ENCODE measurements at regions of chr10 and their contacts with region 1.

Region 1: DNA sequence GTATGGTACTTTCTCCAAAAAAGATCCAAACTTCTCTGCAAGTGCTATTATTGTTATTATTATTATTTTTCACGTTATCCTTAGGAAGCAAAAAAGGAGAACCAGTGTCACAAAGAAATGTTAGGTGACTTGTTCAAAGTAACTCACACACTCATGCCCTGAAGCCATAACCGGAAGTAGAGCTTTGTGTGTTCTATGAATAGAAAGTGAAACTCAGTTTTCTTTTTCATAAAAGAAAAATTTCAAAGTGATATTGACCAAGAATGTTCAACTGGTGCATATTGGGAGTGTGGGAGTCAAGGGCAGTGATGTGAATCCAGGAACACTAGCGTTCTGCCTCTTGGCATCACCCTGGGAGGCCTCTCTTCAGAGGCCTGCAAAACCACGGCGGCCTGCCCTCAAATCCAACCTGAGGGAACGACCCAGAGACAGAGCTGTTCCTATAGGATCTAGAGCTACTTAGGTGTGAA is 106.1 kb downstream of the PRKCQ start:
- DNase-seq: peak; percentile 82
- H3K4me3 Mint-ChIP-seq: peak overlapping the region; percentile 85
- H3K27ac Mint-ChIP-seq: peak overlapping the region; percentile 96
- H3K4me1 Mint-ChIP-seq: peaks cover 54% of the 10 kb centered on the region
- H3K27me3 Mint-ChIP-seq: no peaks in the 10 kb centered on the region

Region 2: DNA sequence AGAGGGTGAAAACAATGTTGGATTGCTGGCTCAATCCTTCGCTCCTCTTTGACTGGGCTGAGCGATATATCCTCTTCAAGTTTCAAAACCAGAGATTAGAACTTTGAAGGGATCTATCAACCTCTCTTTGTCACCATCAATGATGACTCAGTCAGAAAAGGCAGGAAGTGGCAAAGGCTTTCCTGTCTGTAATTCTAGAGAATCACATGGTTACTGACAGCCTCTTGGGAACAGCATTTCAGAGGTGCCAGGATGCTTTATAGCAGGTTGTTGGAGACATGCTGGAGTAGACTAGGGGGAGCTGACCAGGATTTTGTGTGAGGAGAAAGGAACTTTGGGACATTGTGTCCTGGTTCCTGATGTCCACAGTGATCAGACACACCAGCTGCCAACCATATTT is 24.8 kb after region 1 on chr10:
- intact Hi-C with region 1: loop called (anchors 1 kb)
- DNase-seq: peak; percentile 89
- H3K4me3 Mint-ChIP-seq: peak overlapping the region; percentile 78
- H3K27ac Mint-ChIP-seq: peak overlapping the region; percentile 84
- H3K4me1 Mint-ChIP-seq: peaks cover 42% of the 10 kb centered on the region
- H3K27me3 Mint-ChIP-seq: no peaks in the 10 kb centered on the region

Region 3: GRCh38 chr10:6518791-6519429 is 45.0 kb after region 1 on chr10:
- intact Hi-C with region 1: loop called (anchors 1 kb)
- DNase-seq: peak; percentile 74
- H3K4me3 Mint-ChIP-seq: peak overlapping the region; percentile 55
- H3K27ac Mint-ChIP-seq: peak overlapping the region; percentile 68
- H3K4me1 Mint-ChIP-seq: peaks cover 61% of the 10 kb centered on the region
- H3K27me3 Mint-ChIP-seq: no peaks in the 10 kb centered on the region

Region 4: DNA sequence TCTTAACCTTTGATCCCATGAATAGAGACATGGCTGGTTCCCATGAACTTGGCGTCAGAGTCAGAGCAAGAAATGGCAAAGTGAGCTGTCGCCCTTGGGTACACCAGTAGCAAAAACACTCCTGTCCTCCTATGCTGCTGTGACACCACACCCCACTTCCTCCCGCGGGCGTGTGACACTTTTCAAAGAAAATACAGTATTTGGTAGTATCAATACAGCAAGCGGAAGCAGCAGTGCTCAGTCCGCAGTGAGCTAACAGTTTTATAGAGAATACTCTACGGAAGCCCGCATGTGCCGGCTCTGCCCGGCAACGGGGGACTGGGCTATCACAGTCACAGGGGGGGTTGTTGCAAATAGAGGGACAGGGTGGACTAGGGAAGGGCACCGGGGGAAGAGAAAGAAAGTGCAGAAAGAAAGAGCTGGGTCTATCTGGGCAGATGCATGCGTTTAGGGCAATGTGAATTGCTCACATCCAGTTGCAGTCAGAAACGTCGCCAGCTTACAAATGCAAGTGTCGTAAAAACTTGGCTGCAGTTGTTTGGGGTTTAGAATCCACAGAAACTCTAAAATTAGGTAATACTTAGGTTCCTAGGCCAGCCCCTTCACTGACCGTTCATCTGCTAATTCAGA is 56.4 kb after region 1 on chr10:
- intact Hi-C with region 1: loop called (anchors 1 kb)
- DNase-seq: peak; percentile 94
- H3K4me3 Mint-ChIP-seq: peak overlapping the region; percentile 89
- H3K27ac Mint-ChIP-seq: peak overlapping the region; percentile 99
- H3K4me1 Mint-ChIP-seq: peaks cover 78% of the 10 kb centered on the region
- H3K27me3 Mint-ChIP-seq: no peaks in the 10 kb centered on the region

Region 5: GRCh38 chr10:6563075-6563474 is 89.1 kb after region 1 on chr10:
- intact Hi-C with region 1: loop called (anchors 5 kb)
- DNase-seq: peak; percentile 85
- H3K4me3 Mint-ChIP-seq: peak overlapping the region; percentile 77
- H3K27ac Mint-ChIP-seq: peak overlapping the region; percentile 82
- H3K4me1 Mint-ChIP-seq: peaks cover 83% of the 10 kb centered on the region
- H3K27me3 Mint-ChIP-seq: no peaks in the 10 kb centered on the region

Region 6: GRCh38 chr10:6811153-6811552 is 337.2 kb after region 1 on chr10:
- intact Hi-C with region 1: no loop called
- DNase-seq: no peak
- H3K4me3 Mint-ChIP-seq: no peak overlapping the region
- H3K27ac Mint-ChIP-seq: no peak overlapping the region
- H3K4me1 Mint-ChIP-seq: no peaks in the 10 kb centered on the region
- H3K27me3 Mint-ChIP-seq: peaks cover 18% of the 10 kb centered on the region

Region 7: GRCh38 chr10:6863381-6863780 is 389.4 kb after region 1 on chr10:
- intact Hi-C with region 1: no loop called
- DNase-seq: no peak
- H3K4me3 Mint-ChIP-seq: no peak overlapping the region
- H3K27ac Mint-ChIP-seq: no peak overlapping the region
- H3K4me1 Mint-ChIP-seq: no peaks in the 10 kb centered on the region
- H3K27me3 Mint-ChIP-seq: peaks cover 10% of the 10 kb centered on the region

Measured in activated CD4-positive, alpha-beta T cell treated with anti-CD3 and anti-CD28 coated beads, Interleukin-2, amount 10 ng/mL, durations not matched to agents 24 days and 14 days (primary cell).